PC-3 (cell line): ENCODE measurements at regions of chr12 and their contacts with region 1.

Region 1: DNA sequence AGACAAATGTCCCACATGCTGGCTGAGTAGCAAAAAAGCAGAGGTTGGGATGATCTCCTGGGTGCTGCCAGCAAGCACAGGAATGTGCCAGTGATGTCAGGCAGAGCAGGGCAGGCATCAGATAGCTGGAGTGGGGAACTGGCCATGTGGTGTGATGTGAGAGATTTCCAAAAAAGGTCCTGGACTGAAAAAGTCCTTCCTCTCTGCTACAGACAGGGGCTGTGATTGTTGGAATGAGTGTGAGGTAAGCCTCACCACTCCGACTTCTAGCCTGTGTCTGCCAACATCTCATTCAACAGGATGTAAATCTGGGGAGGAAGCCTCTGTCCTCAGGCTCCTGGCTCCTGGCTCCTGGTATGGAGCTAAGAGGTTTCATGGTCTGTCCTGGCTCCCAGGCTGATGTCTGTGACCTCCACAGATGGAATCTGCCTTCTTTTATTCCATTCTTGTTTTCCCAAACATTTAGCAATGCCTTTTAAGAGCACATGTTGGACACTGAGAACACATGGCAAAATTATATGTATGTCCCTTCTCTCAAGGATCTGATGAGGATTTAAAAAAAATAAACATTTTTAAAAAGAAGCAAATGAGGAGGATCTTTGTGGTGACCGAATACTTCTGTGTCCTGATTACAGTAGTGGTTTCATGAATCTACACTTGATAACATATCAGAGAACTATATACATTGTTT is 50.1 kb upstream of the STK38L start:
- DNase-seq: no peak
- ATAC-seq: peak; percentile 3; the same call in 1 of the 2 replicates
- H3K4me3 ChIP-seq: no peak overlapping the region
- H3K27ac ChIP-seq: no peak overlapping the region
- H3K4me1 ChIP-seq: peaks cover 40% of the 10 kb centered on the region
- H3K27me3 ChIP-seq: no peaks in the 10 kb centered on the region
- CTCF ChIP-seq: no peak

Region 2: DNA sequence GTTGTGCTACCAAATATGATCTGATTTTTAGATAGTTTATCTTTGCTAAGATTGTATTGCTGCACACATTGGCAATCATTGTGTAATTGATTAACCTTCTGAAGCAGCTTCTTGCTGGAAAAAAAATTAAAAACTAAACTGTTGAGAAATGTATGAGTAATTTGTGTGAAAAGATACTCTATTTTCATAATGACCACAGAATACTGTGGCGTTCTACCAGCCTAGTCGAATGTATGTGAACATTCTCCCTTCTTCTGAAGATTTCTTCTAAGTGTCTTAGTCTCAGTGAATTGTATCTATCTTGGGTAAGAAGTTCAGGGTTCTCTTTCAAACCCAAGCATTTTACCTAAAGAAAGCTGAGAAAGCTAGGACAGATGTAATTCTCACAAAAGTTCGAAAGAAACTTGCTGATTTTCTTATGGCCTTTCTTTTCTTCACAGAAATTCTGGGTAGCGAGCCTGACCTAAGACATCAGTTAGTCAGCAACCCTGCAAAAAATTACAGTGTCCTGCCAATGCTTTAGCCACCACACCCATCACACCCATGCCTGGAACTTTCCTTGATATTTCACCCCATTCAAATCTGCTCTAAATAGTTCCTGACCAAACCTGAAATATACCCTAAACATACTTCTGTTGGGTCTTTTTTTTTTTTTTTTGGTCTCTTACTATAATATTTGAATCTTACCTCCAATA is 84.5 kb before region 1 on chr12:
- CTCF ChIA-PET with region 1: interaction called, 11 read pairs
- POLR2A ChIA-PET with region 1: no interaction called
- intact Hi-C with region 1: no loop called
- DNase-seq: peak; percentile 24
- ATAC-seq: peak; percentile 70; the same call in 1 of the 2 replicates
- H3K4me3 ChIP-seq: no peak overlapping the region
- H3K27ac ChIP-seq: no peak overlapping the region
- H3K4me1 ChIP-seq: peaks cover 14% of the 10 kb centered on the region
- H3K27me3 ChIP-seq: no peaks in the 10 kb centered on the region
- CTCF ChIP-seq: no peak

Region 3: GRCh38 chr12:27142101-27142721 is 51.8 kb before region 1 on chr12:
- CTCF ChIA-PET with region 1: interaction called, 4 read pairs
- POLR2A ChIA-PET with region 1: no interaction called
- intact Hi-C with region 1: loop called (anchors 5 kb)
- DNase-seq: peak; percentile 96
- ATAC-seq: peak; percentile 98
- H3K4me3 ChIP-seq: no peak overlapping the region
- H3K27ac ChIP-seq: no peak overlapping the region
- H3K4me1 ChIP-seq: no peaks in the 10 kb centered on the region
- H3K27me3 ChIP-seq: no peaks in the 10 kb centered on the region
- CTCF ChIP-seq: peak; percentile 99

Region 4: GRCh38 chr12:27161458-27162228 is 32.4 kb before region 1 on chr12:
- CTCF ChIA-PET with region 1: no interaction called
- POLR2A ChIA-PET with region 1: no interaction called
- intact Hi-C with region 1: loop called (anchors 1 kb)
- DNase-seq: peak; percentile 88
- ATAC-seq: peak; percentile 97
- H3K4me3 ChIP-seq: no peak overlapping the region
- H3K27ac ChIP-seq: peak overlapping the region; percentile 29
- H3K4me1 ChIP-seq: peaks cover 30% of the 10 kb centered on the region
- H3K27me3 ChIP-seq: no peaks in the 10 kb centered on the region
- CTCF ChIP-seq: no peak

Region 5: DNA sequence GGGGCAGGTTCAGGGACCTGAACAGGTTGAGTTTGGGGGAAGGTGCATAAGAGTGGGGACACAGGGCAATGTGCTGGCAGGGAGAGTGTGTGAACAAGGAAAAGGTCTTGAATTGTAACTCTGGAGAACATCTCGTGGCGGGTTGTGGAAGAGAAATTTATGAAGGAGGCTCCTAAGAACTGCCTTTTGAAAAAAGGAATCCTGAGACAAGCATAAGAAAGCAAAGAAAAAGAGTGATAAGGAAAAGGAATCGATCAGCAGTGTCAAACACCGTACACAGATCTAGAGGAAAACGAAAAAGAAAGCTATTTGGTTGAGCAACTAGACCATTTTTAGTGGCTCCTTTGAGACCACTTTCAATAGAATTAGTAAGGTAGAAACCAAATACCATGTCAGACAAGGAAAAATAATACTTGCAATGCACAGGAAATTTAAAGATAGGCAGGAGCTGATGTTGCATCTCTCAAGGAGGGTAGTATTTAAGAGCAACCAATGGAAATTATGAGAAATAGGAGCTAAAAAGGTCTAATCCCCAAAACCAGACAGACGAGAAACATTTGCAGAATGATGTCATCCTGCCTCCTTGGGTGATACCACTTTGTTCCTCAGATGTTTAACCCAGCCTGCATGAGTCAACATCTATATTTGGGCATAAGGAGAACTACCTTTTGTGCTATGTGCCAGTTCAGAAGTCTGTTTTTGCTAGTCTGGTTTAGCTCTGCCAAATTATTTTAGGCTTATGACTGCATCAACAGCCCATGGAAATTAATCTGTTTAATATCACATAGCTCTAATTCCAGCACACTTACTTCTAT is 14.4 kb before region 1 on chr12:
- CTCF ChIA-PET with region 1: no interaction called
- POLR2A ChIA-PET with region 1: no interaction called
- intact Hi-C with region 1: loop called (anchors 1 kb)
- DNase-seq: peak; percentile 100
- ATAC-seq: peak; percentile 86
- H3K4me3 ChIP-seq: peak overlapping the region; percentile 7; the same call in 1 of the 2 replicates
- H3K27ac ChIP-seq: peak overlapping the region; percentile 73
- H3K4me1 ChIP-seq: peaks cover 61% of the 10 kb centered on the region
- H3K27me3 ChIP-seq: no peaks in the 10 kb centered on the region
- CTCF ChIP-seq: no peak

Region 6: DNA sequence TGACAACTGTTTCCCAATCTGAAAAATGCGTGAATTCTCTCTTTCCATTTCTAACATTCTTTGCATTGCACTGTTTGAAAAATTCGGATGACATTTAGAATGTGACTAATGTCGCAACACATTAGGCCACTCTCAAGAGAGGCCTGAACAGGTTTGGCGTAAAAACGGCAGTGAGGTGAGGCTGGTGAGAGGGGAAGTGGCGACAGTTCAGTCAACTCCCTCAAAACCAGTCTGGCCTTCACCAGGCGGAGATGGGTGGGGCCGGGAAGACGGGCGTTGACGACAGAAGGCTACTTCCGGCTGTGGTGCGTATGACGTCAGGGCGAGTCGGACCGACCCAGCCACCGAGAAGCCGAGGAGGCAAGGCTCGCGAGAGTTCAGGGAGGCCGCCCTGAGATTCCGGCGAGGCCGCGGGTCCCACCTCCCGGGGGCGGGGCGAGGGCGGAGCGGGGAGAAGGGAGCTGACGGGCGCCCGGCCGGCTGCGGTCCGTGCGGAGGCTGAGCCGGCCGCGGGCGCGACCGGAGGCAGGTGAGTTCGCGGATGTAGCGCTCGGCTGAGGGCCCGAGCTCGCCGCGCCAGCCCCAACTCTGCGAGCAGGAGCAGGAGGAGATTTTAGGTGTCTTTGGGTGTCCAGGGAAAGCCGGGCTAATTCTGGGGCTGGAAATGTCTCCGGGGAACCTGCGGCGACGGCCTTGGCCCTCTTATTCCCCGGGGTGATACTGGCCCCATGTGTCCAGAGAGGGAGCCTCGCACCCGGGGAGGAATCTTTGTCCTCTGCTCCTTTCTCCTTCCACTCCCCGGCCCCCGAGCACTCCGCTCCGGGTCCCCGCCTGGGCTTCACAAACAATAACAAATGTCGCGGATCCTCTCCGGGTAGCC is 50.0 kb after region 1 on chr12 and contains the start of gene STK38L:
- CTCF ChIA-PET with region 1: interaction called, 3 read pairs
- POLR2A ChIA-PET with region 1: no interaction called
- intact Hi-C with region 1: loop called (anchors 2 kb)
- DNase-seq: peak; percentile 98
- ATAC-seq: peak; percentile 94
- H3K4me3 ChIP-seq: peak within 1 kb of the TSS; percentile 80
- H3K27ac ChIP-seq: peak within 1 kb of the TSS; percentile 40
- H3K4me1 ChIP-seq: peaks cover 28% of the 10 kb centered on the region
- H3K27me3 ChIP-seq: no peaks in the 10 kb centered on the region
- CTCF ChIP-seq: peak; percentile 51; the same call in 1 of the 2 replicates
- total RNA-seq, gene STK38L: 19.4 and 32.3 TPM in 2 replicates

Region 7: GRCh38 chr12:27260746-27261145 is 66.7 kb after region 1 on chr12:
- CTCF ChIA-PET with region 1: no interaction called
- POLR2A ChIA-PET with region 1: no interaction called
- intact Hi-C with region 1: loop called (anchors 2 kb)
- DNase-seq: peak; percentile 40
- ATAC-seq: peak; percentile 55
- H3K4me3 ChIP-seq: no peak overlapping the region
- H3K27ac ChIP-seq: peak overlapping the region; percentile 48
- H3K4me1 ChIP-seq: peaks cover 25% of the 10 kb centered on the region
- H3K27me3 ChIP-seq: no peaks in the 10 kb centered on the region
- CTCF ChIP-seq: no peak

Region 8: GRCh38 chr12:27383429-27384260 is 189.6 kb after region 1 on chr12:
- CTCF ChIA-PET with region 1: no interaction called
- POLR2A ChIA-PET with region 1: no interaction called
- intact Hi-C with region 1: no loop called
- DNase-seq: peak; percentile 98
- ATAC-seq: peak; percentile 86
- H3K4me3 ChIP-seq: no peak overlapping the region
- H3K27ac ChIP-seq: peak overlapping the region; percentile 72
- H3K4me1 ChIP-seq: peaks cover 24% of the 10 kb centered on the region
- H3K27me3 ChIP-seq: no peaks in the 10 kb centered on the region
- CTCF ChIP-seq: peak; percentile 98